ENCODE measurements at regions of chr12 and their contacts with region 1.

Region 1: GRCh38 chr12:126316411-126316810 is 1251.2 kb downstream of the AACS start:
- DNase-seq: no peak
- H3K4me3 ChIP-seq: no peak overlapping the region
- H3K27ac ChIP-seq: no peak overlapping the region
- H3K4me1 ChIP-seq: no peaks in the 10 kb centered on the region
- H3K27me3 ChIP-seq: no peaks in the 10 kb centered on the region
- CTCF ChIP-seq: no peak

Region 2: GRCh38 chr12:126286203-126286602 is 30.2 kb before region 1 on chr12:
- CTCF ChIA-PET with region 1: interaction called, 10 read pairs
- POLR2A ChIA-PET with region 1: no interaction called
- intact Hi-C with region 1: no loop called
- DNase-seq: no peak
- H3K4me3 ChIP-seq: no peak overlapping the region
- H3K27ac ChIP-seq: no peak overlapping the region
- H3K4me1 ChIP-seq: no peaks in the 10 kb centered on the region
- H3K27me3 ChIP-seq: no peaks in the 10 kb centered on the region
- CTCF ChIP-seq: no peak

Measured in PC-9 (cell line).